Esophagus muscularis mucosa (tissue), 4 donors: ENCODE measurements at regions of chr13 and their contacts with region 1.

Region 1: DNA sequence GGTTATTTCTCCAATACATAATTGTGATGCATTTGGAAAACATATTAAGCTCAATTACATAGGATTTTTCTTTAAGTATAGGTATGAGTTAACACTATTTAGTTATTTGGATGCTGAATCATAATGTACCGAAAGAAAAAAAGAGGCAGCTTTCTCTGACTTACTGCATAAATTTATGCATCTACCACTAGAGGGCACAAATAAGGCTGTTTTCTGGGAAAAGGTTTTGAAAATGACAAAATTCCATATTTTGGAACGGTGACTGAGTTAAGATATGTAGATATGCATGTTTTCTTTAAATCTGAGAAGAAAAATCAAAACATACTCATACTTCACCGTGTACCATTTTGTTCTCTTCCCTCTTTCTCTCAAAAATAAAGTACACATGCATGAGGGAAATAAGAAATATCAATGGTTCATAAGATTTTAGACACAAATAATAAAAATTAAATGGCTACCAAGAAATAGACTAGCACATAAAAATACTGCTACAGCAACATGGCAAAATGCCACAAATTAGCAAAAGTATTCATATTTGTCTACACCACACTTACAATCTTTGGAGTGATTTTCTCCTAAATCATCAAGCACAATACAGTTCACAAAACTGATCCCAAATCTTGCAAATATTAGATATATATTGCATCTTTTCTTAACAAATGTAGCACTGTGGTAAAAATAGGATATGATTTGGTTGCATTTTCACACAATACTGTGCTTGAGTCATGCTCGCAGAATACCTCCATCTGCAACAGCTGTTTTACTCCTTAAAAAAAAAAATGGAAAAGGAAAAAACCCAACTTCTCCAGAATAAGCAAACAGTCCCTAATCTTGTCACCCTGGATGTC is 260.0 kb downstream of the FGF14 start:
- DNase-seq: no peak
- H3K4me3 ChIP-seq: no peak overlapping the region
- H3K27ac ChIP-seq: no peak overlapping the region
- H3K4me1 ChIP-seq: no peaks in the 10 kb centered on the region
- H3K27me3 ChIP-seq: no peaks in the 10 kb centered on the region
- CTCF ChIP-seq: peak; percentile 59 to 71 (median 66)
- EP300 ChIP-seq: no peak
- POLR2A ChIP-seq: no peak

Region 2: GRCh38 chr13:101942038-101942437 is 199.8 kb before region 1 on chr13:
- intact Hi-C with region 1: loop called (anchors 10 kb)
- DNase-seq: no peak
- H3K4me3 ChIP-seq: no peak overlapping the region
- H3K27ac ChIP-seq: no peak overlapping the region
- H3K4me1 ChIP-seq: peaks cover 0 to 9% (median 2%) of the 10 kb centered on the region in 4 donors
- H3K27me3 ChIP-seq: no peaks in the 10 kb centered on the region
- CTCF ChIP-seq: peak; percentile 65 to 74 (median 72)
- EP300 ChIP-seq: no peak
- POLR2A ChIP-seq: no peak

Region 3: DNA sequence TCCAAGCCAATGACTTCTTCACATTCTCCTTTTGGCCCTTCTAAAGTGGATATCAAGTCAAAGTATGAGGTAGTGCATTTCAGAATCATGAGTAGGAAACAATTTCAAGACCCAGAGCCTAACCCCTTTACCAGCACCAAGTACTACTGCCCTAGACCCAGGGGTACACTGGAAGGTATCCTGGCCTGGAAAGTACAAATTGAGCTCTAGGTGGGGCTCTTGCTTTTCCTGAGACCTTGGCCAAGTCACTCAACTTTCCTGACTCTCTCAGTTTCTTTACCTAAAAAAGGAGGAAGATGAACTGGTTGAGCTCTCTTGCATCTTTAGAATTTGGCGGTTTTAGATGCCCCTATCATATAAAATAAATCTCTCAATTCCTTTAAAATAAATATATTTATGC is 55.3 kb after region 1 on chr13:
- intact Hi-C with region 1: no loop called
- DNase-seq: no peak
- H3K4me3 ChIP-seq: no peak overlapping the region
- H3K27ac ChIP-seq: no peak overlapping the region
- H3K4me1 ChIP-seq: peaks cover 0 to 5% (median 0%) of the 10 kb centered on the region in 4 donors
- H3K27me3 ChIP-seq: no peaks in the 10 kb centered on the region
- CTCF ChIP-seq: peak in 2 of 3 experiments; percentile 41 to 43
- EP300 ChIP-seq: no peak
- POLR2A ChIP-seq: no peak

Region 4: GRCh38 chr13:102402290-102402689 is 260.4 kb after region 1 on chr13:
- intact Hi-C with region 1: loop called (anchors 10 kb)
- DNase-seq: no peak
- H3K4me3 ChIP-seq: peak overlapping the region; percentile 59 to 77 (median 66)
- H3K27ac ChIP-seq: peak overlapping the region; percentile 0 to 81 (median 74)
- H3K4me1 ChIP-seq: peaks cover 5 to 40% (median 27%) of the 10 kb centered on the region in 4 donors
- H3K27me3 ChIP-seq: peaks cover 0 to 32% (median 9%) of the 10 kb centered on the region in 4 donors
- CTCF ChIP-seq: no peak
- EP300 ChIP-seq: no peak
- POLR2A ChIP-seq: no peak

Region 5: GRCh38 chr13:102460801-102461200 is 319.0 kb after region 1 on chr13:
- intact Hi-C with region 1: loop called (anchors 2 kb)
- DNase-seq: no peak
- H3K4me3 ChIP-seq: no peak overlapping the region
- H3K27ac ChIP-seq: no peak overlapping the region
- H3K4me1 ChIP-seq: no peaks in the 10 kb centered on the region
- H3K27me3 ChIP-seq: no peaks in the 10 kb centered on the region
- CTCF ChIP-seq: no peak
- EP300 ChIP-seq: no peak
- POLR2A ChIP-seq: no peak

Region 6: DNA sequence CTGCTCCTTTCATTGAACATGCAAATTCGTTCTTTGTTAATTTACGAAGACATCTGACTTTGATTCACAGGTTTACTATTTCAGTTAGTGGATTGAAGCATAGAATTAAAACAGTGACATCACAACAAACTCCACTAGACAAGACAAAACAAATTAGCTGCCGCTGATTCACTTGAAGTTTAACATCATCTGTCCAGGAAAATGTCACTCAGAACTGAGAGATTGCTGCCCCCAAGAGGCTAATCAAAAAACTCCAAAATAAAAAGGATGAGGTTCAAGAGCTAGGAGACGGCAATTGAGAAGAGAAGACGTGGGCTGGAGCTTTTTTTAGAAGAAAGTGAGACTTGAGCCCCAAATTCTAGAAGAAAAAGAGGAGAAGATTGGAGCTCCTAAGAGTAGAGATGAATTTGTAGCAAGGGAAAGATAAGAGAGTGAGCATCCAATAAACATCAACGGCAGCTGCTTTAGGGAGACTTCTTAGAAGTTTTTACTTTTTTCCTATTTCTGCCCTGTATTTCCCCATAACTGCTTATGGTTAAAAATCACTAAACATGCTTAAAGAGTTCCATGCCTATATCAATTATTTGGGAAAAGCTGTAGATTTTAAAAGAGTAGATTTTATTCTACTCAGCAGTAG is 414.2 kb after region 1 on chr13:
- intact Hi-C with region 1: loop called (anchors 2 kb)
- DNase-seq: no peak
- H3K4me3 ChIP-seq: no peak overlapping the region
- H3K27ac ChIP-seq: no peak overlapping the region
- H3K4me1 ChIP-seq: peaks cover 0 to 7% (median 0%) of the 10 kb centered on the region in 4 donors
- H3K27me3 ChIP-seq: no peaks in the 10 kb centered on the region
- CTCF ChIP-seq: peak; percentile 40 to 48 (median 44)
- EP300 ChIP-seq: no peak
- POLR2A ChIP-seq: no peak